GM18951 (cell line): ENCODE measurements at regions of chr4 and their contacts with region 1.

Region 1: DNA sequence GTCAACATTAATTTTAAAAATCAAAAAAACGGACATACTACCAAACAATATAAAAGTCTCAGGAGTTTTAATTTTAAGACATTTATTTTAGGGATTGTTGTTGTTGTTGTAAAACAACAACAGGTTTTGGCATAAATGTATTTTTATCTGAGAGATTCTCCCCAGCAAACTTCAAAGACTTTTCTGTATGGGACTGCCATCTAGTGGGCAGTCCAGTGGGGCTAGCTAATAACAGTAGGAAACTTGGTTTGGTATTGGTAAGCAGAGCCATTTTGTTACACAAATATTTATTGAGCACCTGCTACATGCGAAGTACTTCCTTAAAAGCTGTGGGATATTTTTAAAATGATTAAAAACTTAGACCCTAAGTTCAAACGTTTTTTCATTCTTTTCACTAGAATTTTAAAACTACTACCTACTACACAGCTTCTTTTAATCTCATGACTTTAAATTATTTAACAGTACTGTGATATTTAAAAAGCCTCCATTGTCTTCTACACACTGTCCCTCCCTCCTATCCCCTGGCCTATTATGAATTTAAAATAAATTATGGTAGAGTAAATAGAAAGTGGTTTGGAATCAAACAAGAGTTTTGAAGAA is 1028.4 kb upstream of the INTU start:
- POLR2A ChIP-seq: no peak

Region 2: DNA sequence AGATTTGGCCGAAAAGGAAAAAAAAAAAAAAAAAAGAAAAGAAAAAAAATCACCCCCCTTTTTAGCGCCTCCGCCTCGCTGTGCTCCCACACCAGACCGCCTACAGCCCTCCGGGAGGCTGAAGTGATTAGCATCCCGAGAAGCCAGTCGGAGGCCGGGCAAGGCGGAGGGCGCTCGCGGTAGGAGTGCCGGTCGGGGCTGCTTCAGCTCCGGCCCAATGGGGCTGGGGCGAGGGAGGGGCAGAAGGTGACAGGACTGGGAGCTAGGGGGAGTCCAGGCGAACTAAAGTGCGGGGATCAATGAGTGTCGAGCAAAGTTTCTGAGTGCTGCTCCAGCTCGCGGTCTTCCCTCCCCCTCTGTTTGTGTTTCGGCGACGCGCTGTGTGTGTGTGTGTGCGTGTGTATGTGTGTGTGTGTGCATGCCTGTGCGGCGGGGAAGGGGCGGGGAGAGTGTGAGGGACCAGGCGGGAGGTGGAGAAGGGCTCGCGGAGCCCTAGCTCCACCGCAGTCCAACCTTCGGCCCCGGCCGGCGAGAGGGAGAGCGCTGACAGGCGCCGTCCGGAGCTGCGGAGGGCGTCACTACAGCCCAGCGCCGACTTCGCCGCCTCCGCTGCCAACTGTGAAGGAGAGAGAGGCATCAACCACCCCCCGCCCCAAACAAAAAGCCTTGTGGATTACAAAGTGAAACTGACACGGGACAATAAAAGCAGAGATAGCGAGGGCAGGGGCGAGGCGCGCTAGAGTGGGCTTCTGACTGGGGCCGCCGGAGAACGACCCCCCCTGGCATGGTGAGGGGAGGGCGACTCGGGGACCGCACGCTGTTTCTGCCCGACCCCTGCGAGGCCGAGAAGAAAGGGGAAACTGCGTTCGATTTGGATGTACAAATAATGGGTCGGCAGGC is 1289.4 kb before region 1 on chr4 and contains the start of gene FAT4:
- in situ Hi-C with region 1: loop called (anchors 25 kb)
- POLR2A ChIP-seq: no peak

Region 3: DNA sequence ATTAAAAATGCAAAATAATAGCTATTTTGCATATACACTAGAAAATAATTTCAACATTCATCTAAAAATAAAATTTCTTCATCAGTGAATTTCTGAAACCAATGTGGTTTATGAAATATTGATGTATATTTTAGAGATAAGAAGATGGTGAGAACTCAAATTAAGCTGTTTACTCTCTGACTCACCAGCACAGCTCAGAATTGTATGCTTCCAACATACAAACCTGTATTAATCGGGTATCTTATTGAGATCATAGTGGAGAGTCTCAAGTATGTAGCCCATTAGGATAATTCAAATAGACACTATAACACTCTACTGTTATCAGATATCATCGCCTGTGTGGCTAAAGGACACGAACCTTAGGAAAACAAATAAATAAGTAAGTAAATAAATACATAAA is 128.9 kb after region 1 on chr4:
- in situ Hi-C with region 1: no loop called
- POLR2A ChIP-seq: no peak